ENCODE measurements at regions of chr4 and their contacts with region 1.

Region 1: GRCh38 chr4:148649652-148650331 is 207.6 kb upstream of the NR3C2 start:
- DNase-seq: no peak
- H3K4me3 Mint-ChIP-seq: no peak overlapping the region
- H3K27ac Mint-ChIP-seq: no peak overlapping the region
- H3K4me1 Mint-ChIP-seq: peaks cover 3% of the 10 kb centered on the region
- H3K27me3 Mint-ChIP-seq: no peaks in the 10 kb centered on the region

Region 2: DNA sequence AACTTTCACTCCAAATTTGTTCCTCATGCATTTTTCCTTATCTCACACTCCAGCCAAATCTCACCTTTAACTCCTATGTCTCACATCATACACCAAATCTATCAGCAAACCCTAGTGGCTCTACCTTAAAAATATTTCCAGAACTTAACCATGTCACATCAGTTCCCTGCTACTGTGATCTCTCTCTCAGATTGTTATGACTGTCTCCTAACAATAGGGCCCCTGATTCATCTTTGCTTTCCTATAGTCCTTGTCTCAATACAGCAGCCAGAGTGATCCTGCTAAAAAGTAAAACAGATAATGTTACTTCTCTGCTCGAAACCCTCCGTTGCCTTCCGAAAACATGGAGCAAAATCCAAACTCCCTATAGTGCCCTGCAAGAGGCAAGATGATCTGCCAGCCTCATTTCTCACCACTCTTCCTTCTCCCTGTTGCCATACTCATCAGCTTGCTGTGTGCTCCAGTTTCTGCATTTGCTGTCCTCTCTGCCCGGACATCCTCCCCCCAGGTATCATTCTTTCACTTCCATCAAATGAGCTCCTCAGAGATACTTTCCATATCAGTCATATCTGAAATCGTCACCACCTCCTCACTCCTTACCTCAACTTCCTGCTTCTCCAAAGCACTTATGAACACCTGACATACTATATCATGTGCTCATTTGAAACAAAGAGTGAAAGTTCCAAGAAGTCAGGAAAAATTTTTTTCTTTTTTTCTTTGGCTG is 85.8 kb after region 1 on chr4:
- CTCF ChIA-PET with region 1: no interaction called
- intact Hi-C with region 1: loop called (anchors 2 kb)
- DNase-seq: peak; percentile 48
- H3K4me3 Mint-ChIP-seq: no peak overlapping the region
- H3K27ac Mint-ChIP-seq: no peak overlapping the region
- H3K4me1 Mint-ChIP-seq: no peaks in the 10 kb centered on the region
- H3K27me3 Mint-ChIP-seq: no peaks in the 10 kb centered on the region

Measured in activated naive CD4-positive, alpha-beta T cell treated with anti-CD3 and anti-CD28 coated beads for 36 hours (primary cell).